Heart right ventricle (tissue), 16 donors: ENCODE measurements at regions of chr20 and their contacts with region 1.

Region 1: DNA sequence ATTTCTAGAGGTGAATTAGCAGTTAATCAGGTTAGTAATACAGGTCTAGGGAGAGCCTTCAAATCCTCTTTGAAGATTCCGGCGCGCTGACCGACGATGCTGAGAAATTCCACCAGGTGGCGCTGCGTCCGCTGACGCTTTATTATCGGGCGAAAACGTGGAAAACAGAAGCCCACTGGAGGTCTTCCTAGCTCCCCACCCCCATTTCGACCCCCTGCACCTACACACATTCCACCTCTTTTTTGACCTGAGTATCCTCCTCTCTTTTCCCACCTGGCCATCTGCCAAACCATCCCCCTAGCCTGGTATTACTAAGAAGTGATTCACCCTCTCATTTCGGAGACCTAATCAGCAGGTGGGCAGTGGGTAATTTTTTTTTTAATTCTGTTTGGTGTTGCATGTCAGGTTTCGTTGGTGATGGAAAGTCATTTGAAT is 65.4 kb upstream of the RIN2 start:
- DNase-seq: peak; percentile 42 to 61
- ATAC-seq: peak in 4 of 8 donors; percentile 12 to 39 (median 28)
- H3K4me3 ChIP-seq: peak overlapping the region in 1 of 10 donors; percentile 3
- H3K27ac ChIP-seq: no peak overlapping the region
- H3K4me1 ChIP-seq: peaks cover 0 to 47% (median 18%) of the 10 kb centered on the region in 9 donors
- H3K27me3 ChIP-seq: no peaks in the 10 kb centered on the region
- CTCF ChIP-seq: peak; percentile 88 to 95 (median 93)

Region 2: DNA sequence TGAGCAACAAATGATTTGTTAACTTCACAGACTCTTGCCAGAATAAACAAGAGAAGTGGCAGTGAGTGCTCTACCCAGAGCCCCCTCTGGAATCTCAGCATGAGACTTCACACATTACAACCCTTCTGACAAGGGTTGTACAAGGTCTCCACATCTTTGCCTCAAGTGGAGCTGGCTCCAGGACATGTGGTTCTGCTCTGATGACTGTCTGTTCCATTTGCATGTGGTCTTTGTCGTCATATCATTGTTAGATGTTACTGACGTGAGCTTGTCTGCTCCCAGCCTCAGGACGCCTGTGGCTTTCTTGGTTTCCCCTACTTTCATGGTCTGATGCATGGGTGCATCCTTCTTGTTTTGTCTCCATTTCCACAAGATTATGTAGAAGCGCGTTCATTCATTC is 365.3 kb before region 1 on chr20:
- intact Hi-C with region 1: no loop called
- DNase-seq: no peak
- ATAC-seq: no peak
- H3K4me3 ChIP-seq: no peak overlapping the region
- H3K27ac ChIP-seq: no peak overlapping the region
- H3K4me1 ChIP-seq: peaks cover 0 to 3% (median 0%) of the 10 kb centered on the region in 9 donors
- H3K27me3 ChIP-seq: no peaks in the 10 kb centered on the region
- CTCF ChIP-seq: no peak

Region 3: GRCh38 chr20:19531446-19531845 is 161.3 kb before region 1 on chr20:
- intact Hi-C with region 1: no loop called
- DNase-seq: no peak
- ATAC-seq: no peak
- H3K4me3 ChIP-seq: no peak overlapping the region
- H3K27ac ChIP-seq: no peak overlapping the region
- H3K4me1 ChIP-seq: no peaks in the 10 kb centered on the region
- H3K27me3 ChIP-seq: peaks cover 0 to 7% (median 0%) of the 10 kb centered on the region in 7 donors
- CTCF ChIP-seq: no peak

Region 4: DNA sequence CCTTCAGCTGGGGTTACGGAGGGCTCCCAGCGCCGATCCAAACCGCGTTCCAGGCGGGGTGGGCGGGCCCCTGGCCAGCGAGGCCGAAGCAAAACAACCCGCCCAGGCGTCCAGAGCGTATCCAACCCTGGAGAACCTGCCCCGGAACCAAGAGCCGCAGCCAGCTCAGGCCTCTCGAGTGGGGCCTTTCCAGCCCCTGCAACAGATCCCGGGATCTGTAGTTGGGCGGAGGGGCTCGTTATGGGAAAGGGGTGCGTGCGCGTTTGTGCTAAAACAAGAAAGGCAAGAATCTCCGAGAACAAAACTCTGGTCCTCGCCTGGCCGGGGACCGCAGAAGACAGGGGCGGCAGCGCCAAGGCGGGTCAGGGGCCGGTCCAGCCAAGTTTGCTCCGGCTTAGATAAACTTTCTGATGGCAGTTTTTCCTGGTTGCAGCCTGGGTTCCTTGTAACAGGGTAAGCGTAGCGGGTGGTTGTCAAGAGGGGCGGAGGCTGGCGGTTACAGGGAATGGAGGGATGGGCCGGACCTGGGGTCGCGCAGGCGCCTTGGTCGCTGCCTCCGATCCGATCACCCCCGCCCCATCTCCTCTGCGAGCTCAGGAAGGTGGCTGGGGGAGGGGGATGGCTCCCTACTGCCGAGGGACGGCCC is 64.9 kb after region 1 on chr20:
- intact Hi-C with region 1: loop called in 3 of 10 experiments (anchors 1 to 5 kb)
- DNase-seq: peak; percentile 91 to 94
- ATAC-seq: peak; percentile 86 to 93 (median 92)
- H3K4me3 ChIP-seq: peak overlapping the region; percentile 53 to 95 (median 71)
- H3K27ac ChIP-seq: peak overlapping the region; percentile 91 to 100 (median 94)
- H3K4me1 ChIP-seq: peaks cover 15 to 50% (median 43%) of the 10 kb centered on the region in 9 donors
- H3K27me3 ChIP-seq: peaks cover 0 to 8% (median 0%) of the 10 kb centered on the region in 7 donors
- CTCF ChIP-seq: no peak

Region 5: DNA sequence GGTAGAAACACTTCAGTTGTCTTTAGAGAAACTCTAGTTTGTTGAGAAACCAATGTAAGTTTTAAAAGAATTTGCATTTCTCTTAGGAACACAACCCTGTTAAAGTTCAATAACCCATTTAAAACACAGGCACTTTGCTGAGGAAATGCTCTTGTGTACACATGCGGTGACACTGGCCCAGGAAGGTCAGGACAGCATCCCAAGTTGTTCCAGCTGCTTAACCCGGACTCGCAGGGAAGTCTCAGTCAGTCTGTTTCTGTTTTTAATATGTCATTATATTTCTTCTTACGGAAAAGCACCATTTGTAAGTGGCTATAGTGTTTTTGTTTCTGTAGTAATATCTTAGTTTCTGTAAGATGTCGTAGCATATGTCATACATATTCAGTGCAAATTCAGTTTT is 102.2 kb after region 1 on chr20:
- intact Hi-C with region 1: loop called in 6 of 10 experiments (anchors 5 to 10 kb)
- DNase-seq: no peak
- ATAC-seq: peak in 3 of 8 donors; percentile 54 to 63 (median 55)
- H3K4me3 ChIP-seq: no peak overlapping the region
- H3K27ac ChIP-seq: peak overlapping the region in 1 of 10 donors; percentile 34
- H3K4me1 ChIP-seq: peaks cover 0 to 29% (median 16%) of the 10 kb centered on the region in 9 donors
- H3K27me3 ChIP-seq: no peaks in the 10 kb centered on the region
- CTCF ChIP-seq: no peak

Region 6: GRCh38 chr20:19903168-19903811 is 210.6 kb after region 1 on chr20:
- intact Hi-C with region 1: loop called in 1 of 10 experiments (anchors 5 kb)
- DNase-seq: peak in 1 of 2 donors; percentile 47
- ATAC-seq: peak in 7 of 8 donors; percentile 31 to 64 (median 41)
- H3K4me3 ChIP-seq: no peak overlapping the region
- H3K27ac ChIP-seq: peak overlapping the region in 4 of 10 donors; percentile 3 to 37 (median 30)
- H3K4me1 ChIP-seq: peaks cover 5 to 66% (median 45%) of the 10 kb centered on the region in 9 donors
- H3K27me3 ChIP-seq: no peaks in the 10 kb centered on the region
- CTCF ChIP-seq: peak in 7 of 9 donors; percentile 8 to 54 (median 32)

Region 7: DNA sequence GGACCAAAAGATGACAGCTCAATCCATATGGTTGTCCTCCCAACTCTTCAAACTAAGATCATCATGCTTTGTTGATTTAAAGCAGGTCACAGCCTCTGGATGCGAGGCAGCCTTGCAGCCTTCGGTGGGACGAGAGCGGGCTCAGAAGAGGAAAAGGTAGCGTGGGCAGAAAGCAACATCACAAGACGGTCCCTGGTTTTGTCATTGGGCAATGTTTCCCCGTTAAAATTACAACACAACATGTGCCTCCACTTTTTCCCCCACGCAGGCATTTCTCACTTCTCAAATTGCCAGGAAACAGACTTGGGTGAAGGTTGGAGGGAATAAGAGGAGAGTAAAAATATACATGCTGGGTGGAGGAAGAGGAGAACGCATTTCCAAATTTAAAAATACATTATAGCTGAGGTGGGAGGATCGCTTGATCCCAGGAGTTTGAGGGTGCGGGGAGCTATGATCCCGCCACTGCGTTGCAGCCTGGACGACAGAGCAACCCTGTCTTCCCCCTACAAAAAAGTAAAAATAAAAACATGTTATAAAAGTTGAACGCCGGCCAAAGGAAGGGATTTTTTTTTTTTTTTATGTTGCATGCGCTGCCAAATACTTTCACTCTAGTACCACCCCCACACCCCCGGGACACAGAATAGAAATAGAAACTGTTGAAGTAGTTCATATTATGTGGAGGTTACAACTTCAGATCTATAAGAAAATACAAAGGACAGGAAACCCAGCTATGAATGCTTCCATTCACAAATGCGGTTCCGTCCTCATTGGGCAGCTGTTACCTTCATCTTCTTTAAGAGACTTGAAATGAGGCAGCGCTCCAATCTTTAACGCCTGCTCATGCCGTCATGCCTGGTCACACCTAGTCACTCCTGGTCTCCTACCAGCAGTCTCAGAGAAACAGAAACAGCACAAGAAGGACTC is 310.6 kb after region 1 on chr20:
- intact Hi-C with region 1: loop called in 7 of 10 experiments (anchors 5 to 10 kb)
- DNase-seq: peak in 1 of 2 donors; percentile 69
- ATAC-seq: peak; percentile 61 to 83 (median 74)
- H3K4me3 ChIP-seq: peak overlapping the region in 7 of 10 donors; percentile 6 to 42 (median 31)
- H3K27ac ChIP-seq: peak overlapping the region; percentile 31 to 84 (median 68)
- H3K4me1 ChIP-seq: peaks cover 3 to 71% (median 43%) of the 10 kb centered on the region in 9 donors
- H3K27me3 ChIP-seq: no peaks in the 10 kb centered on the region
- CTCF ChIP-seq: no peak